T-cell (primary cell): ENCODE measurements at regions of chr10 and their contacts with region 1.

Region 1: DNA sequence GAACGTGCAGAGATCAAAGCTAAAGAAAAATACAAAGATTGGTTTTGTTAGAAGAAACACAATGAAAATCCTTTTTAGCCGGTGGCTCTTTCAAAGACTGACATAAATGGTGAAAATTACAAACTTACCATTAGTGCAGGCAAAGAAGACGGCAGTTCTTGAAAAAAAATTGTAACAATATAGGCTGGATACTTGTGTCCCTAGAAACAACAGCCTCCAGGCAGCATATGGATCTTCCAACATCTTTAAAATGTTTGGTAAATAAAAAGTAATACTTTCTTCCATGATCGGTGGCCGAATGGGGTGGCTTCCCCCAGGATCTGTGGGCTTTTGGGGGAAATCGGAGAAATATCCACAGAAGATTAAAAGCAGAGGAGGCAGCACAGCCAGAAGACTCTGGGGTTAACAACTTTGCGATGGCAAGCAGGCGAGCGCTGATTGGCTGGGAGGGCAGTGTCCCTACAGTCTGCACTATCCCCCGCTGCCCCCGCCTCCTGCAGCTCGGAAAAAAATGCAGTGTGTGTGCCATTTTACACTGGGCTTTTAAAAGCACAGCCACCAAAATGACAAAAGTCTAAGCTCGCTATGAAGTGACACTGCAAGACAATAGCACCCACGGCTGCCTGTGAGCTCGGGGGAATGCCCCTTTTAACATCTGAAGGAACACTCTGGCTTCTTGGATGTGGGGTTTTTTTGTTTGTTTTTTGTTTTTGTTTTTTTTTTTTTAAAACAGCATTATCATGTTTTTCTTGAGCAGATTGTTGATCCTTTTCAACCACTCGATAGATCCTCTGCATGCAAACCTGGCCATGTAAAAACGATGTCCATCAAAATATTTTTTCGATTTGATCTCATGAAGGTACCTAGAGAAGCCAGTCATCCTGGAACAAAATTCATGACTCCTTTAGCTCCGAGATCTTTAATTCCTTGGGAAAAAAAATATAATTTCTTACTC is 31.7 kb upstream of the EPC1 start:
- DNase-seq: peak; percentile 77 to 97 (median 93)
- ATAC-seq: peak; percentile 91 to 97 (median 96)
- H3K4me3 ChIP-seq: peak overlapping the region; percentile 87 to 97
- H3K4me3 Mint-ChIP-seq: no peak overlapping the region
- H3K27ac ChIP-seq: peak overlapping the region; percentile 77
- H3K27ac Mint-ChIP-seq: no peak overlapping the region
- H3K4me1 ChIP-seq: peaks cover 4 to 23% of the 10 kb centered on the region in 2 experiments
- H3K4me1 Mint-ChIP-seq: peaks cover 17 to 22% (median 21%) of the 10 kb centered on the region in 3 donors
- H3K27me3 ChIP-seq: no peaks in the 10 kb centered on the region
- H3K27me3 Mint-ChIP-seq: no peaks in the 10 kb centered on the region

Region 2: GRCh38 chr10:32445740-32446535 is 67.3 kb after region 1 on chr10 and contains the start of gene CCDC7:
- CTCF ChIA-PET with region 1: interaction called, 3 to 24 read pairs
- POLR2A ChIA-PET with region 1: interaction called, 3 to 7 read pairs
- DNase-seq: peak; percentile 77 to 95 (median 85)
- ATAC-seq: peak; percentile 95 to 98 (median 98)
- H3K4me3 ChIP-seq: peak within 1 kb of the TSS; percentile 64 to 98
- H3K4me3 Mint-ChIP-seq: peak within 1 kb of the TSS; percentile 84 to 98 (median 97)
- H3K27ac ChIP-seq: peak within 1 kb of the TSS; percentile 98
- H3K27ac Mint-ChIP-seq: peak within 1 kb of the TSS; percentile 99 to 100
- H3K4me1 ChIP-seq: peaks cover 9 to 10% of the 10 kb centered on the region in 2 experiments
- H3K4me1 Mint-ChIP-seq: peaks cover 19 to 30% (median 24%) of the 10 kb centered on the region in 3 donors
- H3K27me3 ChIP-seq: no peaks in the 10 kb centered on the region
- H3K27me3 Mint-ChIP-seq: no peaks in the 10 kb centered on the region
- total RNA-seq, gene CCDC7: 48.1 to 74.6 (median 62.1) TPM